IMR-90 (cell line): ENCODE measurements at regions of chr11 and their contacts with region 1.

Region 1: DNA sequence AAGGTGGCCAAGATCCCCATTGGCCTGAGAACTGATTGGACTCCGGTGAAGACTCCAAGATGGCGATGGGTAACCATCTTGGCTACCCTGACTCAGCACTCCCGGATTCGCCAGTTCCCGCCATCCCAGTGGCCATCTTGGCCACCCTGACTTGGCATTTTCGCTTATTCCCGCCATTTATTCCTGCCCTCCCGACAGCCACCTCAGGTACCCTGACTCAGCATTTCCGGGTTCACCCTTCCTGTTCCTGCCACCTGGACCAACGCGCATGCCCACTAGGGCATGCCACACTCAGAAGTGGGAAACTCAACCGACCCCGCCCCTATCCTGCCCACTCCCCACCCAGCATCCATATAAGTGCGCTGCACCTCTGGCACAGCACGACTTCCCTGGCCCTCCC is 7.8 kb downstream of the OR8K5 start:
- DNase-seq: no peak
- ATAC-seq: no peak
- H3K4me3 ChIP-seq: no peak overlapping the region
- H3K27ac ChIP-seq: no peak overlapping the region
- H3K4me1 ChIP-seq: no peaks in the 10 kb centered on the region
- H3K27me3 ChIP-seq: no peaks in the 10 kb centered on the region
- CTCF ChIP-seq: no peak
- POLR2A ChIP-seq: no peak
- RAD21 ChIP-seq: no peak

Region 2: GRCh38 chr11:55634813-55635212 is 517.5 kb before region 1 on chr11 and contains the start of gene OR4P4:
- CTCF ChIA-PET with region 1: no interaction called
- POLR2A ChIA-PET with region 1: no interaction called
- dilution Hi-C with region 1: no loop called
- in situ Hi-C with region 1: loop called (anchors 25 kb)
- intact Hi-C with region 1: no loop called
- DNase-seq: no peak
- ATAC-seq: no peak
- H3K4me3 ChIP-seq: no peak within 1 kb of the TSS
- H3K27ac ChIP-seq: no peak within 1 kb of the TSS
- H3K4me1 ChIP-seq: no peaks in the 10 kb centered on the region
- H3K27me3 ChIP-seq: no peaks in the 10 kb centered on the region
- CTCF ChIP-seq: no peak
- POLR2A ChIP-seq: no peak
- RAD21 ChIP-seq: no peak
- total RNA-seq, gene OR4P4: not detected in 2 replicates